ENCODE measurements at regions of chr17 and their contacts with region 1.

Region 1: DNA sequence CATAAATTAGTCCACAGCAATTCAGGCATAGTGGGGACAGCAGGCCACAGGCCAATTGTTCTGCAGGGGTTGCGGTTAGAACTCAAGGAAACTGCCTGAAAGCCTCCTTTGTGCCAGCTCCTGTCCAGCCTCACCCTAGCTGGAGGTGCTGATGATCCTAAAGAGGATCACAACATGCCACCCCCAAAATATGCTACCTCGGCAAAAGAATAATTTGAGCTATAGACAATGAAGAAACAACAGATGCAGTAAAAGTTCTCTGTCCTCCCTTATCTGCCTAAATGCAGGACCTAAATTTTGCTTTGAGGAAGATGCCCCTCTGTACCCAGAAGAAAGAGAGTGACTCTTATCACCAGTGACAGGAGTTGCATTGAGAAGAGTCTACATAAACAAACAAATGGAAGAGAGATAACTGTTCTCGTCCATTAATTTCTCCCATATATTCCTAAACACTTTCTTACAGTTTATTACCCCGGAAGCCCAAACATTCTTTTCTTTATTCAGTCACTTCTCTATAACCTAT is 14.7 kb downstream of the ALOX15 start:
- DNase-seq: peak in 1 of 10 donors; percentile 11

Region 2: GRCh38 chr17:4565209-4566141 is 61.3 kb before region 1 on chr17:
- intact Hi-C with region 1: loop called (anchors 2 kb)
- DNase-seq: peak in 9 of 10 donors; percentile 56 to 94 (median 69)